ENCODE measurements at regions of chr2 and their contacts with region 1.

Region 1: GRCh38 chr2:172710584-172711024 is 25.0 kb upstream of the RAPGEF4 start:
- DNase-seq: peak; percentile 47
- H3K4me3 ChIP-seq: no peak overlapping the region
- H3K27ac ChIP-seq: no peak overlapping the region
- H3K4me1 ChIP-seq: no peaks in the 10 kb centered on the region
- H3K27me3 ChIP-seq: peaks cover 42% of the 10 kb centered on the region
- CTCF ChIP-seq: peak; percentile 75

Region 2: GRCh38 chr2:172489681-172490080 is 220.9 kb before region 1 on chr2:
- CTCF ChIA-PET with region 1: no interaction called
- POLR2A ChIA-PET with region 1: no interaction called
- intact Hi-C with region 1: loop called (anchors 5 kb)
- DNase-seq: no peak
- H3K4me3 ChIP-seq: no peak overlapping the region
- H3K27ac ChIP-seq: no peak overlapping the region
- H3K4me1 ChIP-seq: no peaks in the 10 kb centered on the region
- H3K27me3 ChIP-seq: no peaks in the 10 kb centered on the region
- CTCF ChIP-seq: no peak

Region 3: GRCh38 chr2:172588931-172589330 is 121.7 kb before region 1 on chr2:
- CTCF ChIA-PET with region 1: interaction called, 3 read pairs
- POLR2A ChIA-PET with region 1: no interaction called
- intact Hi-C with region 1: loop called (anchors 2 kb)
- DNase-seq: no peak
- H3K4me3 ChIP-seq: no peak overlapping the region
- H3K27ac ChIP-seq: no peak overlapping the region
- H3K4me1 ChIP-seq: no peaks in the 10 kb centered on the region
- H3K27me3 ChIP-seq: no peaks in the 10 kb centered on the region
- CTCF ChIP-seq: no peak